Mammary epithelial cell (primary cell): ENCODE measurements at regions of chr11 and their contacts with region 1.

Region 1: DNA sequence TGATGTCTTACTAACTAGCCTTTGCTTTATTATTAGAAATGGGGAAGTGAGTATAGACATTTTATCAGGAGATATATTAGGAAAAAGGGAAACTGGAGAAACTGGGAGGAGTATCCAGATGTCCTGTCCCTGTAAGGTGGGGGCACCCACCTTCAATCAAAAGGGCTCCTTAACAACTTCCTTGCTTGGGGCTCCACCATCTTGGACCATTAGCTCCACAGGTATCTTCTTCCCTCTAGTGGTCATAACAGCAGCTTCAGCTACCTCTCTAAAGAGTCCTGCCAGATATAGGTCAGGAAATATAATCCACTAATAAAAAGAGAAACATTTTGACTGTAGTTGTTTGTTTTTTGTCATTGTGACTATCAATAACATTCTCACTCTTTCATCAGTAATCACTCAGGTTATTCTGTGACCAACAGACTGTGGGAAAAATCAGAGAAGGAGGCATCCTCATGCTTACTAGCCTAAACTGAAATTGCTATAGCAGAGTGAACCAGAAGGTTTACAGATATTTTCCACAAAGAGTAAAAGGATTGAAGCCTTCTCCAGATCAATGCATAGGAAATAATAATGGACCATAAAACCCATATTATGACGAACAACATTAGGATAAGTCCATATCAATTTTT is 10.4 kb downstream of the OR51B4 start:
- DNase-seq: peak; percentile 45
- H3K4me3 ChIP-seq: no peak overlapping the region
- H3K27ac ChIP-seq: no peak overlapping the region
- H3K4me1 ChIP-seq: peaks cover 14% of the 10 kb centered on the region
- H3K27me3 ChIP-seq: no peaks in the 10 kb centered on the region
- CTCF ChIP-seq: peak; percentile 87 to 90

Region 2: GRCh38 chr11:5123802-5124521 is 167.4 kb before region 1 on chr11:
- CTCF ChIA-PET with region 1: no interaction called
- dilution Hi-C with region 1: no loop called
- in situ Hi-C with region 1: no loop called
- intact Hi-C with region 1: loop called (anchors 1 kb)
- DNase-seq: peak; percentile 51
- H3K4me3 ChIP-seq: no peak overlapping the region
- H3K27ac ChIP-seq: no peak overlapping the region
- H3K4me1 ChIP-seq: no peaks in the 10 kb centered on the region
- H3K27me3 ChIP-seq: no peaks in the 10 kb centered on the region
- CTCF ChIP-seq: peak; percentile 76 to 88

Region 3: GRCh38 chr11:5204787-5205186 is 86.5 kb before region 1 on chr11:
- CTCF ChIA-PET with region 1: no interaction called
- dilution Hi-C with region 1: loop called (anchors 5 kb)
- in situ Hi-C with region 1: loop called in 1 of 2 experiments (anchors 10 kb)
- intact Hi-C with region 1: loop called (anchors 1 kb)
- DNase-seq: peak; percentile 58
- H3K4me3 ChIP-seq: no peak overlapping the region
- H3K27ac ChIP-seq: no peak overlapping the region
- H3K4me1 ChIP-seq: no peaks in the 10 kb centered on the region
- H3K27me3 ChIP-seq: no peaks in the 10 kb centered on the region
- CTCF ChIP-seq: peak; percentile 66 to 67

Region 4: GRCh38 chr11:5324197-5324596 is 32.9 kb after region 1 on chr11 and contains the start of gene OR51B2:
- CTCF ChIA-PET with region 1: no interaction called
- dilution Hi-C with region 1: loop called (anchors 5 kb)
- in situ Hi-C with region 1: no loop called
- intact Hi-C with region 1: no loop called
- DNase-seq: no peak
- H3K4me3 ChIP-seq: no peak within 1 kb of the TSS
- H3K27ac ChIP-seq: no peak within 1 kb of the TSS
- H3K4me1 ChIP-seq: no peaks in the 10 kb centered on the region
- H3K27me3 ChIP-seq: no peaks in the 10 kb centered on the region
- CTCF ChIP-seq: no peak
- total RNA-seq, gene OR51B2: not detected

Region 5: DNA sequence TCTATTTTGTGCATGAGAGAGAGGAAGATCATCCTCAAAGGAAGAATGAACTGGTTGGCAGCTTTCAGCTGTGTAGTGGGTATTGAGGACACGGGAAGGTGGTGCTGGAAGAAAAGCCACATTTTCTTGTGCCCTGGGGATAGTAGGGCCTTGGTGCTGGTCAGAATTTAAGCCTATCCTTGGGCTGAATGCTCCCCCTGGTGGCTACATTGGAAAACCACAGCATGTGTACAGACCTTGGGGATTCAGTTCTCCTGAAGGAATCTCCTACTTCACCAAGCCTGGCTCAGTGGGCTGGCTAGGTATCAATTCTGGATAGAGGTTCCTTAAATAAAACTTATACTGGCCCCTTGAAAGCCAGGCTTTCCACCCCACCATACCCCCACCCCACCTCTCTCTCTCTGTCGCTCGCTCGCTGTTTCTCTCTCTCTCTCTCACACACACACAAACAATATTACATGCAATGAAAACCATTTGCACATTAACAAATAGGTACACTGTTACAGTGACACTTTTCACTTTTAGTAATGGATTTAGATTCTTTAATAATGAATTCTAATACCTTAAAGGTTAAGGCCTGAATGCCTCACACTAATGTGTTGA is 89.5 kb after region 1 on chr11:
- CTCF ChIA-PET with region 1: no interaction called
- dilution Hi-C with region 1: no loop called
- in situ Hi-C with region 1: no loop called
- intact Hi-C with region 1: loop called (anchors 2 kb)
- DNase-seq: peak; percentile 35
- H3K4me3 ChIP-seq: no peak overlapping the region
- H3K27ac ChIP-seq: no peak overlapping the region
- H3K4me1 ChIP-seq: no peaks in the 10 kb centered on the region
- H3K27me3 ChIP-seq: no peaks in the 10 kb centered on the region
- CTCF ChIP-seq: peak; percentile 78 to 88

Region 6: DNA sequence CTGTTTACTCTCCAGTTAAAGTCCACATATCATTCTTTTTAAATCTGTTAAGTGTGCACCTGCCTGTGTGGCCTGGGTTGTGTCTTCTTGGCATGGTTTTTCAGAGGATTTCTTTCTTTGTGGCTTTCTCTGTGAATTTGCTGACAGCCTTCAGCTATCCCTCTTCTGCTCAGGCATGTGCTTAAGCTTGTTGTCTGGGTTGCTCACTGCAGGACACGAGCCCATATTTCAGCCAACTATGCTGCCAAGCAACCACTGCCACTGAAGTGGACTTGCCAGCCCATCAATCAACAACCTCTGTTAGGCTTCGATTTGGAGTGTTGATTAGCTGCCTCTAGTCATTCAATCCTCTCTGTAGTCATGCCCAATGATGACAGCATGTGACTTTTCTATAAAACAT is 176.2 kb after region 1 on chr11:
- CTCF ChIA-PET with region 1: no interaction called
- dilution Hi-C with region 1: no loop called
- in situ Hi-C with region 1: no loop called
- intact Hi-C with region 1: no loop called
- DNase-seq: no peak
- H3K4me3 ChIP-seq: no peak overlapping the region
- H3K27ac ChIP-seq: no peak overlapping the region
- H3K4me1 ChIP-seq: no peaks in the 10 kb centered on the region
- H3K27me3 ChIP-seq: no peaks in the 10 kb centered on the region
- CTCF ChIP-seq: no peak